ENCODE measurements at regions of chr18 and their contacts with region 1.

Region 1: GRCh38 chr18:11149441-11150270 is at the start of gene PIEZO2:
- DNase-seq: no peak
- H3K4me3 ChIP-seq: peak within 1 kb of the TSS; percentile 57
- CTCF ChIP-seq: no peak

Region 2: GRCh38 chr18:10953672-10954071 is 196.0 kb before region 1 on chr18:
- CTCF ChIA-PET with region 1: no interaction called
- POLR2A ChIA-PET with region 1: no interaction called
- DNase-seq: no peak
- H3K4me3 ChIP-seq: no peak overlapping the region
- CTCF ChIP-seq: no peak

Region 3: GRCh38 chr18:11136241-11136640 is 13.4 kb before region 1 on chr18:
- CTCF ChIA-PET with region 1: interaction called, 18 read pairs
- POLR2A ChIA-PET with region 1: no interaction called
- DNase-seq: no peak
- H3K4me3 ChIP-seq: no peak overlapping the region
- CTCF ChIP-seq: no peak

Region 4: GRCh38 chr18:11163665-11164064 is 14.0 kb after region 1 on chr18:
- CTCF ChIA-PET with region 1: interaction called, 17 read pairs
- POLR2A ChIA-PET with region 1: no interaction called
- DNase-seq: no peak
- H3K4me3 ChIP-seq: no peak overlapping the region
- CTCF ChIP-seq: peak; percentile 28

Measured in AG04449 (cell line).